ENCODE measurements at regions of chr9 and their contacts with region 1.

Region 1: GRCh38 chr9:89489548-89490530 is 8.1 kb downstream of the SEMA4D start:
- DNase-seq: peak; percentile 9
- H3K4me3 Mint-ChIP-seq: peak overlapping the region; percentile 39
- H3K27ac Mint-ChIP-seq: peak overlapping the region; percentile 70
- H3K4me1 Mint-ChIP-seq: peaks cover 94% of the 10 kb centered on the region
- H3K27me3 Mint-ChIP-seq: no peaks in the 10 kb centered on the region

Region 2: GRCh38 chr9:89304020-89304833 is 185.6 kb before region 1 on chr9:
- CTCF ChIA-PET with region 1: no interaction called
- POLR2A ChIA-PET with region 1: no interaction called
- intact Hi-C with region 1: no loop called
- DNase-seq: no peak
- H3K4me3 Mint-ChIP-seq: no peak overlapping the region
- H3K27ac Mint-ChIP-seq: no peak overlapping the region
- H3K4me1 Mint-ChIP-seq: peaks cover 7% of the 10 kb centered on the region
- H3K27me3 Mint-ChIP-seq: no peaks in the 10 kb centered on the region

Region 3: GRCh38 chr9:89477811-89478630 is 11.8 kb before region 1 on chr9:
- CTCF ChIA-PET with region 1: interaction called, 4 read pairs
- POLR2A ChIA-PET with region 1: interaction called, 10 read pairs
- intact Hi-C with region 1: no loop called
- DNase-seq: peak; percentile 78
- H3K4me3 Mint-ChIP-seq: peak overlapping the region; percentile 79
- H3K27ac Mint-ChIP-seq: peak overlapping the region; percentile 97
- H3K4me1 Mint-ChIP-seq: peaks cover 88% of the 10 kb centered on the region
- H3K27me3 Mint-ChIP-seq: no peaks in the 10 kb centered on the region

Region 4: GRCh38 chr9:89602978-89603766 is 113.3 kb after region 1 on chr9:
- CTCF ChIA-PET with region 1: no interaction called
- POLR2A ChIA-PET with region 1: no interaction called
- intact Hi-C with region 1: no loop called
- DNase-seq: peak; percentile 94
- H3K4me3 Mint-ChIP-seq: peak overlapping the region; percentile 71
- H3K27ac Mint-ChIP-seq: peak overlapping the region; percentile 58
- H3K4me1 Mint-ChIP-seq: peaks cover 28% of the 10 kb centered on the region
- H3K27me3 Mint-ChIP-seq: no peaks in the 10 kb centered on the region

Region 5: DNA sequence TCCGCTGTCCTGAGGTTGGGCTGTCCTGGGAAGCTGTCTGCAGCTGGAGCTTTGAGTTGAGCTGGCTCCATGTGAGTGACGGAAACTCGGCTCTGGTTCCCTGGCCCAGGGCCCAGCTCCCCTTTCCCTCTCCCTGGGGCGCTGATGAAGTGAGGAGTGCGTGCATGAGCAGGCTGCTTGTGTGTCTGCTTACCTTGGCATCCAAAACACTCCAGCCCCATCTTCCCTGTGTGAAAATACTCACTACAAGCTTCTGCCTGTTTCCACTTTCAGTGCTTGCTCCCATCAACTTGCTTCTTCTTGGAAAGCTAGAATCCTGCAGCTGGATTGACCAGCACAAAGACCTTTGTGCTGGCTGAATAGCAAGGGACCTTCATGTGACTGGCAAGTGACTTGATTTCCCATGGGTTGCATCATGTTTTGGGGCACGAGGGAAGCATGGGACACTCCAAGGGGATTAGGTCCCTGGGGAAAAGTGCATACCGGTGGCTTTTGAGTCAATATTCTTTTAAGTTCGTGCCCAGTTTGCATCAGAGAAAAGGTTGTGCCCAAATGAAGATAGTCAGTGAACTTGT is 313.0 kb after region 1 on chr9:
- CTCF ChIA-PET with region 1: no interaction called
- POLR2A ChIA-PET with region 1: no interaction called
- intact Hi-C with region 1: no loop called
- DNase-seq: no peak
- H3K4me3 Mint-ChIP-seq: no peak overlapping the region
- H3K27ac Mint-ChIP-seq: no peak overlapping the region
- H3K4me1 Mint-ChIP-seq: peaks cover 14% of the 10 kb centered on the region
- H3K27me3 Mint-ChIP-seq: no peaks in the 10 kb centered on the region

Measured in activated CD4-positive, alpha-beta memory T cell treated with anti-CD3 and anti-CD28 coated beads for 36 hours (primary cell).